Activated CD4-positive, alpha-beta T cell treated with anti-CD3 and anti-CD28 coated beads, Interleukin-2, amount 10 ng/mL, durations not matched to agents 7 days and 5 days (primary cell): ENCODE measurements at regions of chr2 and their contacts with region 1.

Region 1: GRCh38 chr2:84995826-84996225 is 24.9 kb downstream of the KCMF1 start:
- DNase-seq: no peak
- H3K4me3 Mint-ChIP-seq: no peak overlapping the region
- H3K27ac Mint-ChIP-seq: peak overlapping the region; percentile 7
- H3K4me1 Mint-ChIP-seq: peaks cover 39% of the 10 kb centered on the region
- H3K27me3 Mint-ChIP-seq: no peaks in the 10 kb centered on the region

Region 2: GRCh38 chr2:85015653-85016360 is 20.0 kb after region 1 on chr2:
- CTCF ChIA-PET with region 1: interaction called, 6 read pairs
- POLR2A ChIA-PET with region 1: interaction called, 11 read pairs
- DNase-seq: no peak
- H3K4me3 Mint-ChIP-seq: no peak overlapping the region
- H3K27ac Mint-ChIP-seq: no peak overlapping the region
- H3K4me1 Mint-ChIP-seq: peaks cover 66% of the 10 kb centered on the region
- H3K27me3 Mint-ChIP-seq: no peaks in the 10 kb centered on the region